ENCODE measurements at regions of chr7 and their contacts with region 1.

Region 1: GRCh38 chr7:23712368-23713284 is 2.6 kb downstream of the STK31 start:
- DNase-seq: no peak
- H3K4me3 ChIP-seq: no peak overlapping the region
- H3K27ac ChIP-seq: no peak overlapping the region
- H3K4me1 ChIP-seq: no peaks in the 10 kb centered on the region
- H3K27me3 ChIP-seq: no peaks in the 10 kb centered on the region
- CTCF ChIP-seq: peak; percentile 56 to 59 (median 59)
- EP300 ChIP-seq: no peak
- POLR2A ChIP-seq: no peak

Region 2: DNA sequence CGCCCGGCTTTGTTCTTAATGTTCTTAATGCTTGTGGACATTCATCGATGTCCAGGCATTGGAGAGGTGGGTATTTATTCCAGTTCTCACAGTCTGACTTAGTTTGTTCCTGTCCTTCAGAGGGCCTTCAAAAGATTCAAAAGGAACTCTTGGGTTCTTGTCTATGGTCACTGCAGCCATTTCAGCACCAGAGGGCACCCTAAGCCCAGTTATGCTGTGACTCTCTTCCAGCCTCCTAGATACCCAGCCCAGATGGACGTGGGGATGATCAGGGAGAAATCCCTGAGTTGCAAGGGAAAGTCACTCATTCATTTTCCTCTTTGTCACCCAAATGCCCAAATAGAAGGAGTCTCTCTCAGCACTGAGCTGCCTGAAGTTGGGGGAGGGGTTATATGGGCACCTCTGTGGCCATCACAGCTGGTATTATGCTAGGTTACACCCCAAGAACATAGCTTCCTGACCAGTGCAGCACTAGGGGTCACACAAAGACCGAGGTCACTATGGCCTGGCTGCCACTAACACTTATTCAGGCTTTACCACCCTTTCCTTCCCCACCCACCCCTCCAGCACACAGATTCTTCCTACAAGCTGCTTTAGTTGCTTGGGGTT is 141.9 kb before region 1 on chr7:
- intact Hi-C with region 1: loop called (anchors 1 kb)
- DNase-seq: no peak
- H3K4me3 ChIP-seq: no peak overlapping the region
- H3K27ac ChIP-seq: no peak overlapping the region
- H3K4me1 ChIP-seq: peaks cover 0 to 5% (median 0%) of the 10 kb centered on the region in 4 donors
- H3K27me3 ChIP-seq: peaks cover 0 to 23% (median 0%) of the 10 kb centered on the region in 4 donors
- CTCF ChIP-seq: peak; percentile 80 to 88 (median 84)
- EP300 ChIP-seq: no peak
- POLR2A ChIP-seq: no peak